ENCODE measurements at regions of chr1 and their contacts with region 1.

Region 1: DNA sequence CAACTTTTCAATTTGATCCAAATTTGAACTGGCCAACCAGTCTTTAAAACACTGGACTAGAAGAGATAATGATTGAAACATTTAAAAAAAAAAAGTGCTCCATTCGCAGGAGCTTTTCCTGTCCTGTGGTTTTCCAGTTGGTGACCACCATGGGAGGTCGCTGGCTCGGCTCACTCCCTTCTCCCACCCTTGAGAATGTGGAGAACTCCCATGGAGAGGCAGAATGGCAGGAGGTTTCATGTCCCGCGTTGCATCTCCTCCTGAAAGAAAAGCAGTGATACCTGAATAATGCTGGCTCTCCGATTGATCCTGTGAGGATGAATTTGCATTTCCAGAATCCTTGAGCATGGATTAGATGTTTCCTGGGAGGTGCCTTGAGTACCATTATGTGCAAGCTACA is 16.5 kb upstream of the MPZL1 start:
- DNase-seq: no peak
- H3K4me3 Mint-ChIP-seq: no peak overlapping the region
- H3K27ac Mint-ChIP-seq: no peak overlapping the region
- H3K4me1 Mint-ChIP-seq: peaks cover 7% of the 10 kb centered on the region
- H3K27me3 Mint-ChIP-seq: no peaks in the 10 kb centered on the region

Region 2: DNA sequence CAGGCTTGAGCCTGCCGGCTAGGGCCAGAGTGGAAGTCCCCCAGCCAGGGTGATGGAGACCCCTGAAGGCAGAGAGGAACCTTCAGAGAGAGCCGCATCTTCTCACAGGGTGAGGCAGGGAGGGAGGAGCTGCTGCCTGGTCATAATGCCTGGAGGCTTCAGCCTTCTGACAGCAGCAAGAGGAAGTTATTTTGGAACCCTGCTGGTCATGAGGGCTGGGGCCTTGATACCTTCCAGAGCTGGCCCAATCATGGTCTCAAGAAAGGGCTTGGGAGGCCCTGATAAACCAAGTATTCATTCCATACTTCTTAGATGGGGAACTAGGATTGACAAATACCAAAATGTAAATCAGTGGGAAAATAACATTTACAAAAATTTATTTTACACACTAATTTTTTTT is 10.1 kb before region 1 on chr1:
- CTCF ChIA-PET with region 1: interaction called, 10 read pairs
- POLR2A ChIA-PET with region 1: no interaction called
- DNase-seq: no peak
- H3K4me3 Mint-ChIP-seq: no peak overlapping the region
- H3K27ac Mint-ChIP-seq: no peak overlapping the region
- H3K4me1 Mint-ChIP-seq: no peaks in the 10 kb centered on the region
- H3K27me3 Mint-ChIP-seq: no peaks in the 10 kb centered on the region

Region 3: GRCh38 chr1:167752219-167752985 is 47.2 kb after region 1 on chr1:
- CTCF ChIA-PET with region 1: no interaction called
- POLR2A ChIA-PET with region 1: no interaction called
- DNase-seq: no peak
- H3K4me3 Mint-ChIP-seq: no peak overlapping the region
- H3K27ac Mint-ChIP-seq: no peak overlapping the region
- H3K4me1 Mint-ChIP-seq: peaks cover 17% of the 10 kb centered on the region
- H3K27me3 Mint-ChIP-seq: no peaks in the 10 kb centered on the region

Measured in activated CD4-positive, alpha-beta T cell treated with anti-CD3 and anti-CD28 coated beads, Interleukin-2, amount 10 ng/mL, durations not matched to agents 7 days and 5 days (primary cell).